AG04449 (cell line): ENCODE measurements at regions of chr2 and their contacts with region 1.

Region 1: GRCh38 chr2:179218848-179219594 is 45.6 kb downstream of the SESTD1 start:
- DNase-seq: peak; percentile 57
- H3K4me3 ChIP-seq: no peak overlapping the region
- CTCF ChIP-seq: peak; percentile 79

Region 2: DNA sequence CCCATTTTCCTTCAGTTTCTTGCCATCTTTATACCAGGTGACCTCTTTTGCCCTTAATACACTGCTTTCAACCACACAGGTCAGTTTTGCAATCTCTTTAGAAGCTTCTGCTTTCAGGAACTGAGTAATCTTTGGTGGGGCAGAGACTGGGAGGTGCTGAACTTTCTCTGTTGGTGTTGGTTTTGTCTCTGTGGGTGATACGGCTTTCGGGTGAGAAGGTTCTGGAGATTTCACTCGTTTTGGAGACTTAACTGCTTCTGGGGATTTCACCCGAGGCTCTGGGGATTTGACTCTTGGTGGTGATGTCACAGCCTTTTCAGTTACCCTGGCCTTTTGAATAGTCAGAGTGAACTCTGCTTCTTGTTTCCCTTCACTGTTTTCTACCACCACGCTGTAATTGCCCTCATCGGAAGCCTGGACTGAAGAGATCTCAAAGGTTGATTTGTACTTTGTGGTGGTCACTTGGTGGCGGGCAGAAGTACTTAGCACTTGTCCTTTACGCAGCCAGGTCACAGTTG is 688.3 kb before region 1 on chr2:
- CTCF ChIA-PET with region 1: no interaction called
- POLR2A ChIA-PET with region 1: no interaction called
- DNase-seq: no peak
- H3K4me3 ChIP-seq: no peak overlapping the region
- CTCF ChIP-seq: no peak

Region 3: GRCh38 chr2:179031731-179032408 is 187.2 kb before region 1 on chr2:
- CTCF ChIA-PET with region 1: no interaction called
- POLR2A ChIA-PET with region 1: no interaction called
- DNase-seq: peak; percentile 66
- H3K4me3 ChIP-seq: peak overlapping the region; percentile 19
- CTCF ChIP-seq: no peak

Region 4: GRCh38 chr2:179193759-179194394 is 25.1 kb before region 1 on chr2:
- CTCF ChIA-PET with region 1: interaction called, 11 read pairs
- POLR2A ChIA-PET with region 1: no interaction called
- DNase-seq: no peak
- H3K4me3 ChIP-seq: no peak overlapping the region
- CTCF ChIP-seq: no peak